ENCODE measurements at regions of chr2 and their contacts with region 1.

Region 1: DNA sequence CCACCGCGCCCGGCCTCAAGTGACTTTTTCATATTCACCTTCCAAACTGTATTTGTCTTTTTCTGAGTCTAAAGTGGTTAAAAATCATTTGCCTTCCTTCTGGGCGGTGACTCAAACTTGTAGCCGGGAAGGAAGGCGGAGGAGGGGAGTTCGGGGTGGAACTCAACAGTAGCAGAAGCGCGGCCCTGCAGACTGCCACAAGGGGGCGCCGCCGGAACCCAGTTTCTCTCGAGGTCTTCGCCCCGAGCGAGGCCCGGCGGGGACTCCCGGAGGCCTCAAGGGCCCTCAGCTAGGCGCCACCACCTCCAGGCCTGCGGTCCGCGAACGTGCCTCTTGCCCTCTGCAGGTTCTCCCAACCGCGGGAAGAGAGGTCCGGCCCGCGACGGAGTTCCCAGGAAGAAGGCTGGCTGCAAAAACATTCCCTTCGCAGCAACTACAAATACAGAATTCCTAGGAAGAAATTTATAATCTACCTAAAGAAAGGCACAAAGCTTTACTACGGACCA is 16.8 kb upstream of the ITM2C start:
- DNase-seq: peak; percentile 44
- ATAC-seq: peak; percentile 100
- H3K4me3 ChIP-seq: no peak overlapping the region; the same call in 1 of the 2 replicates
- H3K27ac ChIP-seq: no peak overlapping the region
- H3K4me1 ChIP-seq: peaks cover 5% of the 10 kb centered on the region; the same call in 1 of the 2 replicates
- H3K27me3 ChIP-seq: peaks cover 0 to 3% of the 10 kb centered on the region in 2 experiments; a peak in 1 of 4 replicates
- CTCF ChIP-seq: peak; percentile 84 to 96 (median 91)
- EP300 ChIP-seq: no peak
- POLR2A ChIP-seq: no peak
- RAD21 ChIP-seq: peak; percentile 69

Region 2: GRCh38 chr2:230824406-230824978 is 23.4 kb before region 1 on chr2:
- CTCF ChIA-PET with region 1: interaction called, 38 read pairs
- POLR2A ChIA-PET with region 1: interaction called, 4 read pairs
- RAD21 ChIA-PET with region 1: interaction called, 23 read pairs
- SMC1A ChIA-PET with region 1: interaction called, 11 read pairs
- in situ Hi-C with region 1: no loop called
- intact Hi-C with region 1: loop called (anchors 1 kb)
- DNase-seq: peak; percentile 45
- ATAC-seq: peak; percentile 88
- H3K4me3 ChIP-seq: no peak overlapping the region
- H3K27ac ChIP-seq: no peak overlapping the region
- H3K4me1 ChIP-seq: peaks cover 5% of the 10 kb centered on the region; the same call in 1 of the 2 replicates
- H3K27me3 ChIP-seq: no peaks in the 10 kb centered on the region
- CTCF ChIP-seq: peak; percentile 59 to 77 (median 62)
- EP300 ChIP-seq: no peak
- POLR2A ChIP-seq: no peak
- RAD21 ChIP-seq: peak; percentile 91

Region 3: DNA sequence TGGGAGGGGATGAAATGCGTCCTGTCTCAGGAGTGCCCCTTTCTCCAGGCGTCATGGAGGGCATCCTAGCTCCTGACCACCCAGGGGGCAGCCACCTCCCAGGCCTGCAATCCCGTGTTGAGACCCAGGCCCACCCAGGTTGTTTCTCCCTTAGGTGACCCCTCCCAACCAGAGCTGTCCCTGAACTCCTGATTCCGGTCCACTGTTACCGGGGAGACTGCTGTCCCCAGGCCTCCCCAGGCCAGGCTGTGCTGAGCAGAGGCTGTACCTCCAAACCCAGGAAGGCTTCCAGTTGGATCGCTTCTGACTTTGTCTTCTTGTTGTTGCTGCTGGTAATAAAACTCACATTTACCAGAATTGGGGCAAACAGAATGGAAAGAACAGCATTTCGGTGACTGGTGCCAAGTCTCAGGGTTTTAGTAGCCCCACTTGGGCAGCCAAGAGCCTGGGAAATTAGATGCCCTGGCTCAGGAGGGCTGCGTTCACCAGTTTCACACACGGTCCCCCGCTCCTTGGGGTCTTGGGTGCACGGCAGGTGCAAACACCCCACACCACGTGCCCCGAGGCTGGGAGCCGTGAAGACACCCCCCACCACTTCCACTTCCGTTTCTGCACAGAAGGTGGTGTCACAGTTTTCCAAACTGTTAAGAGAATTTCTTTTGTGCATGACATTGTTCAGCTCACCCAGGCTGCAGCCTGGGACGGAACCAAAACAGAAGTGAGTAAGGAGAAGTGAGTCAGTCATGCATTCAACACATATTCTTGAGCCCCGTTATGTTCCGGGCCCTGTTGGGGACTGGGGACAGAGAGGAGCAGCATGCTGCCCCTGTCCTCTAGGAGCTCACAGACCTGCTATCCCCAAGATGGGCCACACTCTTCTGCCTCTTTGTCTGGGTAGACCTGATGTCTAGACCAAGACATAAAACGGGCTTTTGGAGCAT is 46.2 kb after region 1 on chr2:
- CTCF ChIA-PET with region 1: interaction called, 32 read pairs
- POLR2A ChIA-PET with region 1: interaction called, 3 read pairs
- RAD21 ChIA-PET with region 1: interaction called, 5 read pairs
- SMC1A ChIA-PET with region 1: interaction called, 5 read pairs
- in situ Hi-C with region 1: no loop called
- intact Hi-C with region 1: loop called (anchors 2 kb)
- DNase-seq: no peak
- ATAC-seq: peak; percentile 71
- H3K4me3 ChIP-seq: no peak overlapping the region
- H3K27ac ChIP-seq: 0 out of 2 replicates have a peak overlapping the region, but pooled peaks have one; percentile 7
- H3K4me1 ChIP-seq: peaks cover 39% of the 10 kb centered on the region
- H3K27me3 ChIP-seq: no peaks in the 10 kb centered on the region
- CTCF ChIP-seq: no peak
- EP300 ChIP-seq: no peak; a peak in 1 of 4 replicates
- POLR2A ChIP-seq: no peak
- RAD21 ChIP-seq: no peak

Region 4: GRCh38 chr2:230913406-230914143 is 65.6 kb after region 1 on chr2:
- CTCF ChIA-PET with region 1: interaction called, 17 read pairs
- POLR2A ChIA-PET with region 1: no interaction called
- RAD21 ChIA-PET with region 1: interaction called, 3 read pairs
- SMC1A ChIA-PET with region 1: interaction called, 6 read pairs
- in situ Hi-C with region 1: no loop called
- intact Hi-C with region 1: no loop called
- DNase-seq: no peak
- ATAC-seq: peak; percentile 75
- H3K4me3 ChIP-seq: no peak overlapping the region
- H3K27ac ChIP-seq: peak overlapping the region; percentile 13; the same call in 1 of the 2 replicates
- H3K4me1 ChIP-seq: peaks cover 23% of the 10 kb centered on the region
- H3K27me3 ChIP-seq: no peaks in the 10 kb centered on the region
- CTCF ChIP-seq: peak; percentile 45 to 61 (median 60)
- EP300 ChIP-seq: no peak
- POLR2A ChIP-seq: no peak
- RAD21 ChIP-seq: peak; percentile 62

Region 5: DNA sequence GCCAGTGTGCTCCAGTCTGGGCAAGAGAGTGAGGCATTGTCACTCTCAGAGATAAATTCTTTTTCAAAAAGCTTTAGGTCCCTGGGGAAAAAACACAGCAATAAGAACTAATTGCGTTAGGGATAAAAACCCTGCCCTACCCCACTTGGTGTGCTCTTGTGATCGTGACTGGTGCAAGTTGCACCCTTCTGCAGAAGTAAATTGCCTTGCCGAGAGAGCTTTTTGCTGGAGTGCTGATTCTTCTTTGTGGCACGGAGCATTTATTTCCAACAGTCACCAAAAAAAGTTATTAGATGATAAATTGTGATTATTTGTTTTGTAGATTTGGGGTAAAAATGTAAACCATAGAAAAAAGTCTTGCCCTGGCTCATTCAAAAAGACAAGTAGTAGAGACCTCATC is 89.4 kb after region 1 on chr2:
- CTCF ChIA-PET with region 1: no interaction called
- POLR2A ChIA-PET with region 1: no interaction called
- RAD21 ChIA-PET with region 1: no interaction called
- SMC1A ChIA-PET with region 1: no interaction called
- in situ Hi-C with region 1: no loop called
- intact Hi-C with region 1: no loop called
- DNase-seq: no peak
- ATAC-seq: no peak
- H3K4me3 ChIP-seq: no peak overlapping the region
- H3K27ac ChIP-seq: no peak overlapping the region
- H3K4me1 ChIP-seq: no peaks in the 10 kb centered on the region
- H3K27me3 ChIP-seq: no peaks in the 10 kb centered on the region
- CTCF ChIP-seq: no peak
- EP300 ChIP-seq: no peak
- POLR2A ChIP-seq: no peak
- RAD21 ChIP-seq: no peak

Region 6: DNA sequence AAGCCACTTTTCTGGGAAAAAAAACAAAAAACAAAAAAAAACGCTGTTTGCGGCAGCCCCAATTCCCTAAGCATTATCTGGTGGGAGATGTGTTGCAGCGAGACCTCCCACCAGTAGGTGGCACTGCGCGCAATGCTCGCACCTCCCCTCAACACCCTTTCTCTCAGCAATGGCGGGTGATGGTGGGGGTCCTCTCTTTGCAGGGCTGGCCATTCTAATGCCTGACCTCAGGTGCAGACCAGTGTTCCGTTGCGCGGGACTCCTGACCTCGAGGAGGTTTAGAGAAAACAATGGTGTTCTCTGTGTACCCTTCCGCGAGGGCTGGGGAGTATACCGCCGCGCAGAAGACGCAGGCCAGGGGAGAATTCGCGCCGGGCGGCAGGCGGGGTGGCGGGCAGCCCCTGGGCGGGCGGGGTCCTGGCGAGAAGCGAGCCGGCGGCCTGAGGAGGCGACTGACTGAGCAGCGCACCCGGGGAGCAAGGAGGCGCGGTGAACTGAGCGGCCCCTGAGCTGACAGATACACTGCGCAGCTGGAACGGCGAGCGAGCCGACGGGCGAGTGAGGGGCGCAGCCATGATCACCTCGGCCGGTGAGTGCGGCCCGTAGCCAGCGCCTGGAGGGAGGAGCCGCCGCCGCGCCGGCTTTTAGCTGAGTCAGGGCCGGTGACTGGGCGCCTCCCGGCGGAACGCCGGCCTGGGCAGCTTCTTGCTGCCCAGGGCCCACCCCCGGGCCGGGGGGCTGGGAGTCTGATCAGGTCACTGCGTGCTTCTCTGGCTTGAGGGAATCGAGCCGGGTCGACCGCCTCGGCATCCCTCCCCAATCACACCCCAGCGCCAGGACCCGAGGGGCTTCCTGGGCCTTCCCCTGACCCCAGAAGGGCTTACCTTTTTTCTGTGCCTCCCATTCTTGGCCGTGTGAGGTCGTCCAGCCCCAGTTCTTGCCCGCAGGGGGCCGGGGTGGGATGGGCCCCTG is 208.8 kb after region 1 on chr2 and contains the start of gene PSMD1:
- CTCF ChIA-PET with region 1: interaction called, 13 read pairs
- POLR2A ChIA-PET with region 1: no interaction called
- RAD21 ChIA-PET with region 1: interaction called, 4 read pairs
- SMC1A ChIA-PET with region 1: no interaction called
- in situ Hi-C with region 1: no loop called
- intact Hi-C with region 1: no loop called
- DNase-seq: peak; percentile 80
- ATAC-seq: peak; percentile 87
- H3K4me3 ChIP-seq: peak within 1 kb of the TSS; percentile 90
- H3K27ac ChIP-seq: peak within 1 kb of the TSS; percentile 92
- H3K4me1 ChIP-seq: peaks cover 8% of the 10 kb centered on the region; the same call in 1 of the 2 replicates
- H3K27me3 ChIP-seq: no peaks in the 10 kb centered on the region
- CTCF ChIP-seq: peak; percentile 89 to 98 (median 94)
- EP300 ChIP-seq: 0 out of 4 replicates have a peak, but pooled peaks of 1 of the 2 experiments have one; percentile 10
- POLR2A ChIP-seq: peak; percentile 92
- RAD21 ChIP-seq: no peak
- polyA plus RNA-seq, gene PSMD1: 96.4 to 220 TPM